Heart left ventricle (tissue), 16 donors: ENCODE measurements at regions of chr17 and their contacts with region 1.

Region 1: GRCh38 chr17:52762147-52762793 is 603.8 kb upstream of the CA10 start:
- DNase-seq: peak in 4 of 5 donors; percentile 25 to 49 (median 35)
- ATAC-seq: peak in 3 of 4 donors; percentile 42 to 57 (median 50)
- H3K4me3 ChIP-seq: no peak overlapping the region
- H3K27ac ChIP-seq: no peak overlapping the region
- H3K4me1 ChIP-seq: peaks cover 0 to 4% (median 0%) of the 10 kb centered on the region in 12 donors
- H3K27me3 ChIP-seq: no peaks in the 10 kb centered on the region
- CTCF ChIP-seq: no peak
- POLR2A ChIP-seq: no peak

Region 2: GRCh38 chr17:52721910-52722309 is 40.4 kb before region 1 on chr17:
- intact Hi-C with region 1: no loop called
- DNase-seq: no peak
- ATAC-seq: no peak
- H3K4me3 ChIP-seq: no peak overlapping the region
- H3K27ac ChIP-seq: no peak overlapping the region
- H3K4me1 ChIP-seq: no peaks in the 10 kb centered on the region
- H3K27me3 ChIP-seq: no peaks in the 10 kb centered on the region
- CTCF ChIP-seq: no peak
- POLR2A ChIP-seq: no peak

Region 3: GRCh38 chr17:52738791-52739190 is 23.5 kb before region 1 on chr17:
- intact Hi-C with region 1: loop called in 1 of 10 experiments (anchors 1 kb)
- DNase-seq: no peak
- ATAC-seq: no peak
- H3K4me3 ChIP-seq: peak overlapping the region in 6 of 12 donors; percentile 9 to 36 (median 29)
- H3K27ac ChIP-seq: peak overlapping the region in 6 of 12 donors; percentile 2 to 56 (median 16)
- H3K4me1 ChIP-seq: peaks cover 0 to 6% (median 0%) of the 10 kb centered on the region in 12 donors
- H3K27me3 ChIP-seq: no peaks in the 10 kb centered on the region
- CTCF ChIP-seq: no peak
- POLR2A ChIP-seq: no peak

Region 4: DNA sequence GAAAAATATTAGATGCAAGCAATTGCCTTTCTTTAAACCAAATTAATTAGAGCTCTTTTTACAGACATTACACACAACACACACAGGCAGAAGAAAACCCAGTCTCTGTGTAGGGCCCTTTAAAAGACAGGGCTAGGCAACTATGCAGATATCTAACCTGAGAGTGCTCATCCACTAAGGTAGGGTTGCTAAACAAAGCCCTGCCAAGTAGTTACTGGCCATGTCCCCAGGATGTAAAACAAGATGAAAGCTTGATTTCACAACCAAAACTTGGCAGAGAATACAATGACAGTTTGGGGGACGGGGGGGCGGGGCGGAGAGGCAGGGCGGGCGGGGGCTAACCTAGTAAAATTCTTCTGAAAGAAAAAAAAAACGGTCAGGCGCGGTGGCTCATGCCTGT is 65.3 kb after region 1 on chr17:
- intact Hi-C with region 1: loop called in 2 of 10 experiments (anchors 2 to 10 kb)
- DNase-seq: no peak
- ATAC-seq: no peak
- H3K4me3 ChIP-seq: no peak overlapping the region
- H3K27ac ChIP-seq: no peak overlapping the region
- H3K4me1 ChIP-seq: peaks cover 0 to 3% (median 0%) of the 10 kb centered on the region in 12 donors
- H3K27me3 ChIP-seq: no peaks in the 10 kb centered on the region
- CTCF ChIP-seq: no peak
- POLR2A ChIP-seq: no peak